Activated CD4-positive, alpha-beta T cell treated with anti-CD3 and anti-CD28 coated beads for 36 hours (primary cell): ENCODE measurements at regions of chr2 and their contacts with region 1.

Region 1: DNA sequence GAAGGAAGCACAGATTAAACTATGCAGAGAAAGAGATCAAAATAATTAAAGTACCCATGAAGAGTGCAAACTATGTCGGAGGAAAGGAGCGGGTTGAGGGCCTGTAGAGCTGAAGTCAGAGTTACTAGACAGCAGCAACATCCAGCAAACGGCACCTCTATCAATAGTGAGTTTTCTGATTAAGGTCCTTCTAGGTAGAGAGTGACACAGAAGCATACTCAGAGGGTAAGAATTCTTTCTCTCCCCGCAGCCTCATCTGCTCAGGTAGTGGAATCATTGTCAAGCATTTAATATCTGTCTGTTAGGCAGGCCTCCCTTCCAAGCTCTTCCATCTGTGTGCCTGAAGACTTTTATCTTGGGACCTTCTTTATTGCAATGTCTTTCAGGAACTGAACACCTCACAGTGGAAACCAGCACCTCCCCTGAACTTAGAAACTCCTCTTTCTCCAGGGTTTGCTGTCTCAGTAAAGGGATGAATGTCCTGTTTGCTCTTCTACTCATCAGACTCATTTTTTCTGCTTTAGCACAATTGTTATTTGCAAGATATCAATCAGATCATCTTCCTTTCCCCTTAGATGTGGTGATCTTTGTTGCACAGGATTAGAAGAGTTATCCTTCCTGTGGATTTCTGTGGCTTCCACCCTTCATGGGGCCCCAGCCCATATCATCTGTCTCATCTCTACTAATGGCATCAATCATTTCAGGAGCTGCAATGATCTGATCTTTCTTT is 28.8 kb downstream of the SP140 start:
- DNase-seq: peak; percentile 73
- ATAC-seq: peak; percentile 79
- H3K4me3 Mint-ChIP-seq: no peak overlapping the region
- H3K27ac Mint-ChIP-seq: no peak overlapping the region
- H3K4me1 Mint-ChIP-seq: peaks cover 18% of the 10 kb centered on the region
- H3K27me3 Mint-ChIP-seq: no peaks in the 10 kb centered on the region

Region 2: DNA sequence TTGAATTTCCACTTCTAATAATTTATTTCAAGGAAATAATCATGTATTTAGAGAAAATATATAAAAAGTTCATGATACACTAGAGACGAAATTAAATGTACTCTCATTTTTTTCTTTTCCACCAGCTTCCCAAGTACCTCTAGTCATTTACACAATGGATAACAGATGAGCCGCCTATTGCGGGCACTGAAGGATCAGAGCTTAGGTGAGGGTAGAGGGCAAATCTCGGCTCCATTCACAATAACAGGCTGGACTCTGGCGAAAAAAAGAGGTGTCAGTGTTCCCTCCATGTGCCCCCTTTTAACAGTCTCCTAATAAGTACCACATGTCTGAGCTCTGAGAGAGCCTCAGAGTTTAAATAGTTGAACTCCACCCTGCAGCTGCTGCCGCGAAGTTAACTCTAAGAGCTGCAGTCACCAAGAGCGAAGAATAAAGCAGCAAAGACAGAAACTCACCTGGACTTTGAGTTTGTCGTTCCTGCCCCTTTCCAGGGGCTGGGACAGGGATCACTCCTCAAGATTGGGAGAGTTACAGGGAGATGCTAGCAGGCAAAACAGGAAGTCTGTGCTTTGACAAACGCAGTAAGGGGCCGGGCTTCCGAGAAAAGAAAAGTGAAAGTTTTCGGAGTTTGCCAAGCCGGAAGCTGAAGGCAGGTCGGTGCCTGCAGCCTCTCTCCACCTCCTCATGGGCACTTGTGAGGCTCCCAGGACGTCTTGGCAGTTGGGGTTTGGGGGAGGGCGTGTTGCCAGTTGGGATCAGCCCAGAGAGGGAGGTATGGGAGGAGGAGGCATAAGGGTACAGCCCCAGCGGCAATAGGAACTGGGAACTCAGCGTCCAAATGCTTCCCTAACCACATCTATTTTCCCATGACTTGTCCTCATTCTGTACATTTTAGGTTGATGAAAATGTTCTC is 34.6 kb before region 1 on chr2 and contains the start of gene SP110:
- CTCF ChIA-PET with region 1: no interaction called
- POLR2A ChIA-PET with region 1: no interaction called
- intact Hi-C with region 1: loop called in 1 of 2 experiments (anchors 5 kb)
- DNase-seq: peak; percentile 89
- ATAC-seq: peak; percentile 91
- H3K4me3 Mint-ChIP-seq: peak within 1 kb of the TSS; percentile 88
- H3K27ac Mint-ChIP-seq: peak within 1 kb of the TSS; percentile 97
- H3K4me1 Mint-ChIP-seq: peaks cover 66% of the 10 kb centered on the region
- H3K27me3 Mint-ChIP-seq: no peaks in the 10 kb centered on the region
- total RNA-seq, gene SP110: 96.2 to 111 TPM

Region 3: GRCh38 chr2:230234845-230235244 is 19.5 kb before region 1 on chr2:
- CTCF ChIA-PET with region 1: no interaction called
- POLR2A ChIA-PET with region 1: no interaction called
- intact Hi-C with region 1: loop called (anchors 1 kb)
- DNase-seq: no peak
- ATAC-seq: peak; percentile 85
- H3K4me3 Mint-ChIP-seq: no peak overlapping the region
- H3K27ac Mint-ChIP-seq: peak overlapping the region; percentile 86
- H3K4me1 Mint-ChIP-seq: peaks cover 47% of the 10 kb centered on the region
- H3K27me3 Mint-ChIP-seq: no peaks in the 10 kb centered on the region

Region 4: GRCh38 chr2:230286048-230286447 is 31.7 kb after region 1 on chr2:
- CTCF ChIA-PET with region 1: no interaction called
- POLR2A ChIA-PET with region 1: no interaction called
- intact Hi-C with region 1: loop called (anchors 1 to 5 kb)
- DNase-seq: no peak
- ATAC-seq: no peak
- H3K4me3 Mint-ChIP-seq: no peak overlapping the region
- H3K27ac Mint-ChIP-seq: no peak overlapping the region
- H3K4me1 Mint-ChIP-seq: peaks cover 16% of the 10 kb centered on the region
- H3K27me3 Mint-ChIP-seq: no peaks in the 10 kb centered on the region

Region 5: DNA sequence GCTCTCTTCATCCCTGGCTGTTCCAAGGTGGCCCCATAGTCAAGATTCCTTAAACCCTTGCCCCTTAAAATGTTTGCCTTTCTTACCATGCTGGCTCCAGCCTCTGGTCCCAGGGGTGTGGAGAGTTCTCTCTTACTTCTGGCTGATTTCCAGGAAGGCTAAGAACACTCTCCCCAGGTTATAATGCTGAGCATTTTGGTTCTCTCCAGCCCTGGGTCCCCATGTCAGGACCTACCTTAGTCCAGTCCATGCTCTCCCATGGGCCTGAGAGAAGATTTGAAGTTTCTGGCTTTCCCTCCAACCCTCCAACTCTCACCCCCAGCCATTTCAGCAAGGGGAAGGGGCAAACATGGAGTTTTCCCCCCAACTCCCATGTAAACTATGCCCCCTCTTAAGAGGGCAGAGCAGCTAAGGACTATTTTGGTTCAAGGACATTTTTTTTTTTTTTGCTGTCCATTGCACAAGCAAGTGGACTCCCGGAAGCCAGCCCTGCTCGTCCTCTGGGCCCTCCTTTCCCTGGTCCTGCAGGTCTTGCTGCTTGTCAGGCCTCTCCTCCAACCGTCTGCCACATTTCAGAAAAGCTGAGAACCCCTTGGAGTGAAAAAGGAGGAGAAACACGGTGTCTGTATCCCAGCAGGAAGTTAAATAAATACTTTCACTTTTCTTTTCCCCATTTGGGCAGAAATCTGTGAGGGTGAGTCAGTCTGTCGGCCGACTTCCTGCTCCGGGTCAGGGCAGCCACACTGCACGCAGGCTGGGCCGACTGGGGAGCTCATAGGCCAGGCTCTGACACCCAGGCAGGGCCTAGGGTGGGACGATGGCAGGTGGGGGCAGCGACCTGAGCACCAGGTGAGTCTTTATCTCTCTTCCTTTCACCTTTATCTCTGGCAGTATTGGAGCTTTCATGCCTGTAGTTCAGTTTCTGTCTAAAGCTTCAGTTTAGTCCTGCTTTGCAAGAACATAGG is 72.4 kb after region 1 on chr2 and contains the start of gene SP140L:
- CTCF ChIA-PET with region 1: interaction called, 3 read pairs
- POLR2A ChIA-PET with region 1: no interaction called
- intact Hi-C with region 1: loop called in 1 of 2 experiments (anchors 1 kb)
- DNase-seq: peak; percentile 89
- ATAC-seq: peak; percentile 97
- H3K4me3 Mint-ChIP-seq: peak within 1 kb of the TSS; percentile 89
- H3K27ac Mint-ChIP-seq: peak within 1 kb of the TSS; percentile 98
- H3K4me1 Mint-ChIP-seq: peaks cover 61% of the 10 kb centered on the region
- H3K27me3 Mint-ChIP-seq: no peaks in the 10 kb centered on the region
- total RNA-seq, gene SP140L: 40.1 to 43.4 TPM